A673 (cell line): ENCODE measurements at regions of chr2 and their contacts with region 1.

Region 1: DNA sequence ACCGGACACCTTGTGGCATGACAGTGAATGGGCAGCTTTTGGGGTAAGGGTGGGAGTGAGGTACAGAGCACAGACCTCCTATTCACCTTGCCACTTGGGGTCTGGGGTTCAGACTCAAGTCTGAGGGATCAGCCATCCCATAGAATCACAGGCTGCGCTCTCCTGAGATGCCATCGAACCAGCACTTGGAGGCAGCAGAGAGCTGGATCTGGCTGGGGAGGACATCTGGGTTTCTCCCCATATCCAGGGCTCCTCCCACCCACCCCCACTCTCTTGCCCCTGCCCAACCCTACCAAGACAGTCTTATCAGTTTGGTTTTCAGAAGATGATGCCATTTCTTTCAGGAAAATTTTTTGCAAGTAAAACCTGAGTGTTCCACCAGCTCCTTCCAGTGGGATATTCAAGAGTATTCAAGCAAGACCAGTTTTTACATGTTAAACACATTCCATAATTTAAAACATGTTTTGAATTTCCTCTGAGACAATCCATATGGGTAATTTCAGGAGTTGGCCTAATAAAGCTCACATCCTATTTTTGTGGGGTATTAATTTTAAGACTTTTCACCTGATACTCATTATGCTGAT is 29.2 kb upstream of the TEX44 start:
- DNase-seq: peak; percentile 71
- H3K4me3 ChIP-seq: no peak overlapping the region
- H3K27ac ChIP-seq: no peak overlapping the region
- H3K4me1 ChIP-seq: no peaks in the 10 kb centered on the region
- H3K27me3 ChIP-seq: no peaks in the 10 kb centered on the region
- CTCF ChIP-seq: peak; percentile 64

Region 2: DNA sequence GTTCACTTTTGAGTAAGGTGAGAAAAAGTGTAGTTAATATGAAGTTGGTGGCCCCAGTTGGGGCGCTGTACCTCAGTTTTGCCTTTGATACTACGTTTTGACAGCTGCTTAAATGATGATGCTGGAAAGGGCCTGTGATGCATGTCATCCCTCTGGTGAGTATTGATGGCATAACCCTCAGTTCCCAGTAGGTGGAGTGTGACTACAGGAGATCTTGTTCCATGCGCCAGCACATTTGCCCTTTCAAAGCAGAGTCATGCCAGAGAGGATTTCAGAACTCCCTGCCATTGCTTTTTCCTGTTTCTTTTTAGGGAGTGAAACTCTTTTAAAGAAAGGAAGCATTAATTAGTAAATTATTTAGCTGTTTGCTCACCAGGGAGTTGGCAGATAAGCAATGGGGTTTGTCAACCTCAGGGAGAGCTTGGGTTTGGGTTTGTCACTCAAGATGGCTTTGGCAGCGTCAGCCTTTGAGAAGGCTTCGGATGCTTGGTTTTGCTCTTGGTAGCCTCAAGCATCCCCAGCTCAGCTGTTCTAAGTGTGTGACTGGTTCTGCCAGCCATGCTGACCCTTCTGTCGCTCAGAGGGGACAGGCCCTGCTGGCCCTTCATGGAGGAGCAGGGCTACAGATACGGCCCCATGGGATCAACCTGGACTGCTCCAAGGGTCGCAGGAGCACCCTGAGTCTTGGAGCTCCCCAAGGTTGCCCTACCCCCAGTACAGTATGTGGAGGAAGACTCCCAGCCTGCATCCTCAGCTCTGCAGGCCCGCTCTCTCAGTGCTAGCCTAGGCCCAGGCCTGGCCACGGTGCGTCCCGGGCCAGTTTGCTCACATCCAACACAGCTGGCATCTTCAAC is 335.9 kb before region 1 on chr2:
- CTCF ChIA-PET with region 1: no interaction called
- POLR2A ChIA-PET with region 1: no interaction called
- intact Hi-C with region 1: loop called (anchors 10 kb)
- DNase-seq: peak; percentile 82
- H3K4me3 ChIP-seq: no peak overlapping the region
- H3K27ac ChIP-seq: no peak overlapping the region
- H3K4me1 ChIP-seq: no peaks in the 10 kb centered on the region
- H3K27me3 ChIP-seq: no peaks in the 10 kb centered on the region
- CTCF ChIP-seq: peak; percentile 83

Region 3: DNA sequence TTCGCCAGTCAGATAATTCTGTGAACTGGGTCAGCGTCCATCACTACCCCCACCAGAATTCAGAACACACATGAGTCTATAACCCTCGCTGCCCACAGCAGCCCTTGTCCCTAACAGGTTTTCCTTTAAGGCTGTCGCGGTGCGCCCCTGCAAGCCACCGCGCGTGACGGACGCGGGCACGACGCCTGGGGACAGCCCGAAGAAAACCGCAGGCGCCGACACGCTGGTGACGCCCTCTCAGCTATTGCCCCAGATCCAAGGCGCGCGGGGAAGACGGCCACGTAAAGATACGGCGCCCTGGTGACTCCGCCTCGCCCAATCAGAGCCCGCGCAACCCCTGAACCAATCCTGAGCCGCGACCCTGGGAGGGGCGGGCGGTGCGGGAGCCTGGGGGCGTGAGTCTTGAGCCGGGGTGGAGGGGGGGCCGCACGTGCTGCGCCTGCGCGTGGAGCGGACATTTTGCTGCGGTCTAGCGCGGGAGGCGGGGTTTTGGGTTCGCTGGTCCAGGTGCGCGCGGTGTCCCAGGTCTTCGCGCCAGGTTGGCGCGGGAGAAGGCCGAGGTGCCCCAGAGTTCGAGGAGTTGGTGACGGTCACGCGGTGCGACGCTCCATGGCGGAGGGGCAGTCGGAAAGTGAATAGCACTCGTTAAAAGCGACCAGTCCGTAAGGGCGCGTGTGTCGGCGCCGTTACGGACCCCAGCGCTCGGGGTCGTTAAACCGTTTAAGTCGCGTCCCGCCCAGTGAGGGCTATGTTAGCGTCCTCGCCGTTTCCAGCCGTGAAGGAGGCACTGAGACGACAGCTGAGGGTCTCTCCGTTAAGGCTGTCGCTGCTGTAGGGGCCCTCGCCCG is 49.1 kb before region 1 on chr2:
- CTCF ChIA-PET with region 1: no interaction called
- POLR2A ChIA-PET with region 1: no interaction called
- intact Hi-C with region 1: loop called (anchors 2 kb)
- DNase-seq: peak; percentile 99
- H3K4me3 ChIP-seq: peak overlapping the region; percentile 62
- H3K27ac ChIP-seq: peak overlapping the region; percentile 88
- H3K4me1 ChIP-seq: peaks cover 13% of the 10 kb centered on the region
- H3K27me3 ChIP-seq: no peaks in the 10 kb centered on the region
- CTCF ChIP-seq: no peak

Region 4: GRCh38 chr2:231530091-231531011 is 33.1 kb before region 1 on chr2 and contains the start of gene NMUR1:
- CTCF ChIA-PET with region 1: no interaction called
- POLR2A ChIA-PET with region 1: no interaction called
- intact Hi-C with region 1: no loop called
- DNase-seq: peak; percentile 56
- H3K4me3 ChIP-seq: peak within 1 kb of the TSS; percentile 24
- H3K27ac ChIP-seq: no peak within 1 kb of the TSS
- H3K4me1 ChIP-seq: no peaks in the 10 kb centered on the region
- H3K27me3 ChIP-seq: peaks cover 5% of the 10 kb centered on the region
- CTCF ChIP-seq: peak; percentile 65
- total RNA-seq, gene NMUR1: not detected in 2 replicates

Region 5: GRCh38 chr2:231601349-231602229 is 38.1 kb after region 1 on chr2:
- CTCF ChIA-PET with region 1: interaction called, 19 read pairs
- POLR2A ChIA-PET with region 1: no interaction called
- intact Hi-C with region 1: loop called (anchors 1 kb)
- DNase-seq: peak; percentile 81
- H3K4me3 ChIP-seq: no peak overlapping the region
- H3K27ac ChIP-seq: no peak overlapping the region
- H3K4me1 ChIP-seq: peaks cover 12% of the 10 kb centered on the region
- H3K27me3 ChIP-seq: no peaks in the 10 kb centered on the region
- CTCF ChIP-seq: peak; percentile 86